ENCODE measurements at regions of chr11 and their contacts with region 1.

Region 1: GRCh38 chr11:114651145-114651718 is 27.1 kb upstream of the NXPE2 start:
- DNase-seq: no peak
- ATAC-seq: no peak
- H3K4me3 ChIP-seq: no peak overlapping the region
- H3K27ac ChIP-seq: no peak overlapping the region
- H3K4me1 ChIP-seq: no peaks in the 10 kb centered on the region
- H3K27me3 ChIP-seq: no peaks in the 10 kb centered on the region
- CTCF ChIP-seq: no peak
- POLR2A ChIP-seq: no peak
- RAD21 ChIP-seq: no peak

Region 2: DNA sequence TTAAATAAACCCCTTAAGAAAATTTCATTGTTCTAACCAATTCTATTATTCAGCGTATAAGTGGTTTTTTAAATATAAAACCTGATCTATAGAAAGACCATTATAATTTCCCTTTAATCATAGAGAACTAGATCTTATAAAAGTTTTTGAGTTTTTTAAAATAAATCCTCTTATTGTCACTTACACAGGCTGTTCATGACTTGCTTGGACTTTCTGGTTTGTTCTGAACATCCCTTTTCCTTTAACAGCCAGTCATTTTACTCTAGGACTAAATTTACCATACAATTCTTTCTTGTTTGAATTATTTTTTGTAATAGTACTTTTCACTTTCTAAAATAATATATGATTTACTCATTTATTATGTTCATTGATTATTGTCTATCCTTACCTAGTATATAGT is 31.8 kb after region 1 on chr11:
- CTCF ChIA-PET with region 1: interaction called, 11 read pairs
- POLR2A ChIA-PET with region 1: no interaction called
- dilution Hi-C with region 1: no loop called
- in situ Hi-C with region 1: no loop called
- intact Hi-C with region 1: no loop called
- DNase-seq: no peak
- ATAC-seq: no peak
- H3K4me3 ChIP-seq: no peak overlapping the region
- H3K27ac ChIP-seq: no peak overlapping the region
- H3K4me1 ChIP-seq: 0 out of 2 replicates have a peak, but pooled peaks cover 1% of the 10 kb centered on the region
- H3K27me3 ChIP-seq: no peaks in the 10 kb centered on the region
- CTCF ChIP-seq: no peak
- POLR2A ChIP-seq: no peak
- RAD21 ChIP-seq: no peak